Naive thymus-derived CD8-positive, alpha-beta T cell (primary cell): ENCODE measurements at regions of chr7 and their contacts with region 1.

Region 1: GRCh38 chr7:100673300-100673941 is at the start of gene GNB2:
- DNase-seq: peak; percentile 92 to 97 (median 96)
- ATAC-seq: peak; percentile 53 to 55
- H3K4me3 Mint-ChIP-seq: peak within 1 kb of the TSS; percentile 94 to 97 (median 96)
- H3K27ac Mint-ChIP-seq: peak within 1 kb of the TSS; percentile 84 to 99 (median 97)
- H3K4me1 Mint-ChIP-seq: peaks cover 8 to 22% (median 21%) of the 10 kb centered on the region in 4 donors
- H3K27me3 Mint-ChIP-seq: no peaks in the 10 kb centered on the region
- polyA plus RNA-seq, gene GNB2: 34.8 to 42.4 (median 42.1) TPM

Region 2: GRCh38 chr7:100626530-100627237 is 46.7 kb before region 1 on chr7:
- POLR2A ChIA-PET with region 1: interaction called, 17 read pairs
- DNase-seq: peak; percentile 77 to 93 (median 84)
- ATAC-seq: peak; percentile 96 to 97
- H3K4me3 Mint-ChIP-seq: peak overlapping the region; percentile 68 to 81 (median 78)
- H3K27ac Mint-ChIP-seq: peak overlapping the region; percentile 28 to 90 (median 86)
- H3K4me1 Mint-ChIP-seq: peaks cover 16 to 49% (median 39%) of the 10 kb centered on the region in 4 donors
- H3K27me3 Mint-ChIP-seq: no peaks in the 10 kb centered on the region

Region 3: DNA sequence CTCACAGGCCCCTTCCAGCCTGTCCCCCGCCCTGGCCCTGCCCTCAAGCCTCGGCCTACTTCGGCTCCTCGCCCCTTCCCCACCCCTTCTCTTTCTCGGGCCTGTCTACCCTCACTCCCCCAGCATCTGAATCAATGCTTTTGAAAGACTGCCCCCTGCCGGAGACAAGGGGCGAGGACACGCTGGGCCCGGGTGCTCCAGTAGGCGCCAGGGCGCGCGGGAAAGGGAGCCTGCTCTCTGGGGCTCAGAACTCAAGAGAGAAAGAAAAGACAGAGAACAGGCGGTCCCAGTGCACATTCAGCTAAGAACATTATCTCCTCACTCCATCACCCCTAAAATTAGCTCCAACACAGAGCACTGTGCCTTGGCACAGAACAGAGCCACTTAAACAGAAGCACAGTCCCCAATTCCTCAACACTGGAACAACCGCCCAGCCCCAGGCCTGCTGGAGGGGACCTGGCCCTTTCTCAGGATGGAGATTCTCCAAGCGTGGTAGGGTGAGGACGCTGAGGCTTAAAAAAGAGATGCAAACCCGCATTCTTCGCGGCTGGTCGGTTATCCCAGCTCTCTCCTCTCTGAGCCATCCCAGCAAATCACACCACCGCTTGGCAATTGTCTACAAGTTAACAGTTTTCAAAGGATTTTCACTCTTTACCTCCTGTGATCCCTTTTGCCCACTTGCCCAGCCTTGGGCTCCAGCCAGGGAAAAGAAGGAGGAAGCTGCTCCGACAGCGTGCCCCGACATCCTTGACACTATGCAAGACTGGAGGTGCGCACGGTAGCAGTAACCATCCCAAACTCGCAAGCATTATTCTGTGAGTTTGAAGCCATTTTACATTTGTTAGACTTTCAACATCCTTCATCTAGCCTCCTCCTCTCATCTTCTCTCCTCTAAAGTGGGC is 18.5 kb after region 1 on chr7:
- POLR2A ChIA-PET with region 1: interaction called, 170 read pairs
- DNase-seq: peak; percentile 59 to 89 (median 78)
- ATAC-seq: peak; percentile 71 to 73
- H3K4me3 Mint-ChIP-seq: peak overlapping the region; percentile 88 to 99 (median 95)
- H3K27ac Mint-ChIP-seq: peak overlapping the region; percentile 30 to 97 (median 90)
- H3K4me1 Mint-ChIP-seq: peaks cover 23 to 56% (median 46%) of the 10 kb centered on the region in 4 donors
- H3K27me3 Mint-ChIP-seq: no peaks in the 10 kb centered on the region

Region 4: GRCh38 chr7:100720645-100721504 is 47.5 kb after region 1 on chr7:
- POLR2A ChIA-PET with region 1: no interaction called
- DNase-seq: no peak
- ATAC-seq: no peak
- H3K4me3 Mint-ChIP-seq: peak overlapping the region in 2 of 10 donors; percentile 31 to 68
- H3K27ac Mint-ChIP-seq: peak overlapping the region in 1 of 10 donors; percentile 13
- H3K4me1 Mint-ChIP-seq: peaks cover 3 to 6% (median 5%) of the 10 kb centered on the region in 4 donors
- H3K27me3 Mint-ChIP-seq: peaks cover 24 to 56% (median 44%) of the 10 kb centered on the region in 5 donors

Region 5: GRCh38 chr7:100983451-100984187 is 310.2 kb after region 1 on chr7:
- POLR2A ChIA-PET with region 1: no interaction called
- DNase-seq: no peak
- ATAC-seq: no peak
- H3K4me3 Mint-ChIP-seq: no peak overlapping the region
- H3K27ac Mint-ChIP-seq: no peak overlapping the region
- H3K4me1 Mint-ChIP-seq: no peaks in the 10 kb centered on the region
- H3K27me3 Mint-ChIP-seq: peaks cover 3 to 44% (median 10%) of the 10 kb centered on the region in 5 donors